ENCODE measurements at regions of chr4 and their contacts with region 1.

Region 1: GRCh38 chr4:11418610-11419009 is 10.1 kb downstream of the HS3ST1 start:
- DNase-seq: no peak
- CTCF ChIP-seq: no peak

Region 2: DNA sequence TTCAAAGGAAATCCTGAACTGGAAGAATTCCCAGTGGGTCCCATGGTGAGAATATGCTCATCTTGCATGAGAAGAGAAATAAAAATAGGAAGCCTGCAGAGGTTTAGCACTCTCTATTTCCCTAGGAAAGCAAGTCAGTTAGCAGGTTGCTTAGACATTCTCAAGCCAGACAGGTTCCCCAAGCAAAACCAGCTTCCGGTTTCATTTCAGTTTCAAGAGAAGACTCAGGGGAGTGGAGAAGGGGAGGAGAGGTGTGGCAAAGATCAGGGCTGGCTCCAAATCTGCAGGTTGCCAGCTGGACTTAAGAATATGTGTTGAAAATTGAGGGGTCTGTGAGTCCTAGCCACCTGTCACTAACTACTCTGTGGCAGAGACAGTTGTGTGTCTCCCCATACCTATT is 841.6 kb before region 1 on chr4:
- in situ Hi-C with region 1: loop called (anchors 10 kb)
- DNase-seq: no peak
- CTCF ChIP-seq: no peak